AG04450 (cell line): ENCODE measurements at regions of chr6 and their contacts with region 1.

Region 1: DNA sequence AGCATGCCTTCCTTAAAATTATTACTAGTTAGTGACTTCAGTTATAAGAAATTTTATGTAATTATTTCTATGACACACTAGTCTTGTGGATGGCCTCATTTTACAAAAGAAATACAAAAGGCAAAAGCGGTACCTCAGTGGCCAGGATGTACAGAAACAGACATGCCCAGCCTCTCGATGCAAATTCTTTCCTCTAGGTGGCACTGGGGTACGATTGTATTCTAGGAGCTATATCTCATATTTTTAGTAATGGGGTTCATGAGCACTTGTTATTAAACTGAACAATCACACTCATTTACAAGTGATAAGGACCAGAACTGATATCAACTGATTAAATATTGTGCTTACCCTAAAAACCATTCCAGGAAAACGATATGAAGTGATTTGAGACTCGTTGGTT is 59.8 kb downstream of the SOD2 start:
- DNase-seq: no peak
- H3K4me3 ChIP-seq: no peak overlapping the region
- H3K27ac ChIP-seq: no peak overlapping the region
- H3K27me3 ChIP-seq: no peaks in the 10 kb centered on the region
- CTCF ChIP-seq: peak; percentile 65

Region 2: GRCh38 chr6:159620947-159621346 is 12.2 kb before region 1 on chr6:
- CTCF ChIA-PET with region 1: interaction called, 11 read pairs
- POLR2A ChIA-PET with region 1: no interaction called
- DNase-seq: no peak
- H3K4me3 ChIP-seq: no peak overlapping the region
- H3K27ac ChIP-seq: no peak overlapping the region
- H3K27me3 ChIP-seq: peaks cover 3% of the 10 kb centered on the region
- CTCF ChIP-seq: no peak

Region 3: DNA sequence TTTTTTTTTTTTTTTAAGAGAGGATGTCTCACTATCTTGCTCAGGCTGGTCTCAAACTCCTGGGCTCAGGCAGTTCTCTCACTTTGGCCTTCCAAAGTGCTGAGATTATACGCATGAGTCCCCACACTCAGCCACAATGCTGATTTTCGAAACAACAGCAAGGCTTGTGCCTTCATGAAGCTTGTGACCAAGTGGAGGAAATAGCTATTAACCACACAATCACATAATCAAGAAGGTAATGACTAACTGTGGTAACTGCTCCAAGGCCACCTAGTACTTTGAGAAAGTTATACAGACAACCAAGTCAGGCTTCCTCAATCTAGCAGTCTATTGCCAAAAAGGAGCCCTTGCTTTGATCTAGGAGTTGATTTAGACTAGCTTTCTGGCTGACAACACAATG is 13.5 kb after region 1 on chr6:
- CTCF ChIA-PET with region 1: interaction called, 23 read pairs
- POLR2A ChIA-PET with region 1: interaction called, 3 read pairs
- DNase-seq: no peak
- H3K4me3 ChIP-seq: no peak overlapping the region
- H3K27ac ChIP-seq: no peak overlapping the region
- H3K27me3 ChIP-seq: no peaks in the 10 kb centered on the region
- CTCF ChIP-seq: no peak

Region 4: GRCh38 chr6:159665868-159666635 is 32.9 kb after region 1 on chr6:
- CTCF ChIA-PET with region 1: no interaction called
- POLR2A ChIA-PET with region 1: no interaction called
- DNase-seq: no peak
- H3K4me3 ChIP-seq: no peak overlapping the region
- H3K27ac ChIP-seq: peak overlapping the region; percentile 31
- H3K27me3 ChIP-seq: no peaks in the 10 kb centered on the region
- CTCF ChIP-seq: no peak